Dorsolateral prefrontal cortex (tissue), 120 donors: ENCODE measurements at regions of chr1 and their contacts with region 1.

Region 1: GRCh38 chr1:50368179-50369012 is 54.8 kb downstream of the DMRTA2 start:
- DNase-seq: peak in 8 of 10 donors; percentile 11 to 64 (median 37)
- H3K4me3 ChIP-seq: peak overlapping the region in 54 of 59 donors; percentile 4 to 58 (median 41)
- H3K27ac ChIP-seq: no peak overlapping the region
- H3K27me3 ChIP-seq: peaks cover 0 to 8% (median 0%) of the 10 kb centered on the region in 45 donors
- CTCF ChIP-seq: peak; percentile 70 to 93 (median 84)

Region 2: DNA sequence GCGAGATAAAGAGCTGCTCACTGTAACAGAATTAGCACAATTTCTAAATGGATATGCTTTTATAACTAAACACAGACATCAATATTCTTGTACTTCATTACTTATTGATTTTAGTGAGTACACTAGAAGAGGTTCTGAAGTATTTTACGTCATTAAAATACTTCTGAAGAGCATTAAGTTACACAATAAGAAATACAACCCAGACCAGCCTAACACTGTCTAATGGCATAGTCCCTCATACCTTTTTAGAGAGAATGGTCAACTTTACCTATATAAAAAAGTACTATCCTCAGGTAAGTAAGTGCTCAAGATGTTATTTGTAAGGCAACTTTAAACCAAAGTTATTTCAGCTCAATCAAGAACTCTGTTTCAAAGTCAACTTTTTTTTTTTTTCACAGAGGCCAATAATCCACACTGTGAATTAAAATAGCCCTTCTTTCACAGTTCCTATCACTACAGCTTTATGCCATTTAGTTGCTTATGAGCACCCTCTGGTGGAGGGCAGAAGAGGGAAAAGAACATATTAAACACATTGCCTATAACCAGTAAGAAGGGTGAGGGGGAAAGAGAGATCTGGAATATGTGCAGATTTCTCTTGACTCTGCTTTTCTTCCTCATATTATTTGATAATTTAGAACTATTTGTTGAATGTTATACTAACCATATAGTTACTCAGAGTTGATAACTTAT is 236.9 kb after region 1 on chr1:
- intact Hi-C with region 1: loop called (anchors 5 kb)
- DNase-seq: no peak
- H3K4me3 ChIP-seq: no peak overlapping the region
- H3K27ac ChIP-seq: no peak overlapping the region
- H3K27me3 ChIP-seq: no peaks in the 10 kb centered on the region
- CTCF ChIP-seq: peak in 45 of 56 donors; percentile 8 to 70 (median 39)

Region 3: DNA sequence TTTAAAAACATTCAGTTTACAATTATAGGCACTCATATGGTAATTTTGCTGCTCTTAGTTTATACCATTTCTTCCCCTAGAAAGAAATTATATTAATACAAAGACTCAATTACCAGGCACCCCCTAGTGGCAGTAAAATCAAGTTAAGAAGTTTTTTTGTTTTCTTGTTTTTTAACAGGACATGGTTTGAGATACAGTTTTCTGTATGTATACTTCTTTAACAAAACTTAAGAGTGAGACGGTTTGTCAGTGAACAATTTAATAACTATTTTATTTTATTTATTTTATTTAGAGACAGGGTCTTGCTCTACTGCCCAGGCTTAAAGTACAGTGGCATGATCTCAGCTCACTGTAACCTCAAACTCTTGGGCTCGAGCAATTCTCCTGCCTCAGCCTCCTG is 367.0 kb after region 1 on chr1:
- intact Hi-C with region 1: loop called (anchors 5 to 10 kb)
- DNase-seq: no peak
- H3K4me3 ChIP-seq: no peak overlapping the region
- H3K27ac ChIP-seq: no peak overlapping the region
- H3K27me3 ChIP-seq: no peaks in the 10 kb centered on the region
- CTCF ChIP-seq: peak; percentile 47 to 83 (median 68)